SK-N-SH (cell line): ENCODE measurements at regions of chr5 and their contacts with region 1.

Region 1: DNA sequence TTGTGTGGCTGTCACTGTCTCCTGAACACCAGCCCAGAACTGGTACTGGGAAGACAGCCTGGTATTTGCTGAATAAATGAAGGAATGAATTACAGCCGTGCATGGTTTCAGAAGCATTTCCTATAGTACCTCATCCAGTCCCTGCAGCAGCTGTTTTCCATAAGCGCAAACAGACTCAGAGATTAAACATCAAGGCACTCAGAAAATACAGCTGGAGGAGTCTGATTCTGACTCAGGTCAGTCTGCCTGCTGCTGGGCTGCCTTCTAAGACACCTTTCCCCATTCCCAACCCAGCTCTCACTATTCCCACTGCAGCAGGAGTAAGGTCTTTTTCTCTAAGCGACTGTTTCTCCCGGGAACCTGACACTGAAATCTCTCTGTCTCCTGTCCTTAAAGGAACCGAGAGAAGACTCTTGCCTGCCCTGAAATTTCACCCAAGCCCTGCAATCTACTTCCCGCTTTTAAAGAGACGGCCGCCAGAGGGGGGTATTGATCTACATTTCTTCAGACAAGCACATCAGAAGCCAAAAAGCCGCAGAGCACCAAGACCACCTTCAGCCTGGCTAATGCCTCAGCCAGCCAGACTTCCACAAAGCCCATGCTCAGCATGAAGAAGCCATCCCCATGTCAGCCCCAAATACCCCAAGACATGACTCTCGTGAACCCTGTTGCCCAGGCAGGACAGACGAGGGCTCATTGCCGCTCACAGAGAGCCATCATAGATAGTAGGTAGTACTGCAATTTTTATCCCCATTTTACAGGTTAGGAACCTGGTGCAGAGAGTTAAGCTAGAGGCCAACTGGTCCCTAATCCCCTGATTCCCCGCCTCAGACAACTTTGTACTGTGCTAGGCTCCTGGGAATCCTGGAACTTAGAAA is 5.4 kb upstream of the FOXI1 start:
- DNase-seq: peak; percentile 78
- H3K4me3 ChIP-seq: no peak overlapping the region
- H3K27ac ChIP-seq: no peak overlapping the region
- H3K4me1 ChIP-seq: peaks cover 0 to 2% of the 10 kb centered on the region in 2 experiments; a peak in 1 of 4 replicates
- H3K27me3 ChIP-seq: no peaks in the 10 kb centered on the region
- CTCF ChIP-seq: peak; percentile 83
- EP300 ChIP-seq: no peak
- RAD21 ChIP-seq: peak; percentile 93

Region 2: GRCh38 chr5:170049713-170050112 is 50.6 kb before region 1 on chr5:
- CTCF ChIA-PET with region 1: interaction called, 11 read pairs
- POLR2A ChIA-PET with region 1: no interaction called
- DNase-seq: no peak
- H3K4me3 ChIP-seq: no peak overlapping the region
- H3K27ac ChIP-seq: no peak overlapping the region
- H3K4me1 ChIP-seq: peaks cover 0 to 20% of the 10 kb centered on the region in 2 experiments; a peak in 1 of 4 replicates
- H3K27me3 ChIP-seq: no peaks in the 10 kb centered on the region
- CTCF ChIP-seq: no peak
- EP300 ChIP-seq: no peak
- RAD21 ChIP-seq: no peak

Region 3: DNA sequence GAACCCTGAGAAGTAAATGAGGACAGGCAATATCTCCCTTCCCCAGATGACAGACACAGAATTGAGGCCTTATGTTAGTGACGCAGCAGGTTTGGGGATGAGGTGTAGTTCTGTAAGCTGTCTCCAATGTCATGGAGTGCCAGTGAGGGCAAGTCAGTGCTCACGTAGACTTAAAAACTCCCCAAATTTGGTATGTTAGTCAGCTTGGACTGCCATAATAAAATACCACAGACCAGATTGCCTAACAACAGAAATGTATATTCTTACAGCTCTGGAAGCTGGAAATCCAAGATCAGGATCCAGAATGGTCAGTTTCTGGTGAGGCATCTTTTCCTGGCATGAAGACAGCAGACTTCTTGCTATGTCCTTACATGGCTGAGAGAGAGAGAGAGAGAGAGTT is 20.3 kb after region 1 on chr5:
- CTCF ChIA-PET with region 1: interaction called, 33 read pairs
- POLR2A ChIA-PET with region 1: no interaction called
- DNase-seq: no peak
- H3K4me3 ChIP-seq: no peak overlapping the region
- H3K27ac ChIP-seq: peak overlapping the region in 1 of 2 experiments; percentile 37; a peak in 1 of 4 replicates
- H3K4me1 ChIP-seq: no peaks in the 10 kb centered on the region
- H3K27me3 ChIP-seq: no peaks in the 10 kb centered on the region
- CTCF ChIP-seq: no peak
- EP300 ChIP-seq: no peak
- RAD21 ChIP-seq: no peak

Region 4: GRCh38 chr5:170173235-170173634 is 72.9 kb after region 1 on chr5:
- CTCF ChIA-PET with region 1: interaction called, 15 read pairs
- POLR2A ChIA-PET with region 1: no interaction called
- DNase-seq: no peak
- H3K4me3 ChIP-seq: no peak overlapping the region
- H3K27ac ChIP-seq: no peak overlapping the region
- H3K4me1 ChIP-seq: peaks cover 0 to 18% of the 10 kb centered on the region in 2 experiments; a peak in 1 of 4 replicates
- H3K27me3 ChIP-seq: no peaks in the 10 kb centered on the region
- CTCF ChIP-seq: no peak
- EP300 ChIP-seq: no peak
- RAD21 ChIP-seq: no peak

Region 5: GRCh38 chr5:170190436-170191134 is 90.3 kb after region 1 on chr5:
- CTCF ChIA-PET with region 1: interaction called, 201 read pairs
- POLR2A ChIA-PET with region 1: no interaction called
- DNase-seq: no peak
- H3K4me3 ChIP-seq: no peak overlapping the region
- H3K27ac ChIP-seq: no peak overlapping the region
- H3K4me1 ChIP-seq: peaks cover 0 to 2% of the 10 kb centered on the region in 2 experiments; a peak in 1 of 4 replicates
- H3K27me3 ChIP-seq: no peaks in the 10 kb centered on the region; the same call in 1 of the 2 replicates
- CTCF ChIP-seq: no peak
- EP300 ChIP-seq: no peak
- RAD21 ChIP-seq: no peak

Region 6: GRCh38 chr5:170216266-170216864 is 116.1 kb after region 1 on chr5:
- CTCF ChIA-PET with region 1: interaction called, 143 read pairs
- POLR2A ChIA-PET with region 1: no interaction called
- DNase-seq: peak; percentile 57
- H3K4me3 ChIP-seq: no peak overlapping the region; a peak in 1 of 4 replicates
- H3K27ac ChIP-seq: no peak overlapping the region
- H3K4me1 ChIP-seq: peaks cover 0 to 15% of the 10 kb centered on the region in 2 experiments; a peak in 1 of 4 replicates
- H3K27me3 ChIP-seq: no peaks in the 10 kb centered on the region
- CTCF ChIP-seq: peak; percentile 75
- EP300 ChIP-seq: no peak
- RAD21 ChIP-seq: peak; percentile 98